ENCODE measurements at regions of chr15 and their contacts with region 1.

Region 1: GRCh38 chr15:55267401-55268175 is 22.0 kb downstream of the RAB27A start:
- DNase-seq: peak; percentile 65 to 90 (median 85)
- H3K4me3 ChIP-seq: peak overlapping the region; percentile 55
- H3K4me3 Mint-ChIP-seq: peak overlapping the region; percentile 44 to 83 (median 68)
- H3K27ac ChIP-seq: peak overlapping the region; percentile 81
- H3K27ac Mint-ChIP-seq: peak overlapping the region; percentile 91 to 98 (median 96)
- H3K4me1 ChIP-seq: peaks cover 74% of the 10 kb centered on the region
- H3K4me1 Mint-ChIP-seq: peaks cover 87 to 99% (median 91%) of the 10 kb centered on the region in 3 donors
- H3K27me3 ChIP-seq: no peaks in the 10 kb centered on the region
- H3K27me3 Mint-ChIP-seq: no peaks in the 10 kb centered on the region

Region 2: GRCh38 chr15:55255714-55256113 is 11.9 kb before region 1 on chr15:
- CTCF ChIA-PET with region 1: interaction called, 14 read pairs
- POLR2A ChIA-PET with region 1: interaction called, 15 read pairs
- DNase-seq: peak in 2 of 5 donors; percentile 38 to 43
- H3K4me3 ChIP-seq: peak overlapping the region; percentile 63
- H3K4me3 Mint-ChIP-seq: peak overlapping the region; percentile 86 to 91 (median 89)
- H3K27ac ChIP-seq: peak overlapping the region; percentile 52
- H3K27ac Mint-ChIP-seq: peak overlapping the region; percentile 91 to 98 (median 96)
- H3K4me1 ChIP-seq: peaks cover 58% of the 10 kb centered on the region
- H3K4me1 Mint-ChIP-seq: peaks cover 78 to 91% (median 82%) of the 10 kb centered on the region in 3 donors
- H3K27me3 ChIP-seq: no peaks in the 10 kb centered on the region
- H3K27me3 Mint-ChIP-seq: no peaks in the 10 kb centered on the region

Region 3: GRCh38 chr15:55279746-55280351 is 12.3 kb after region 1 on chr15:
- CTCF ChIA-PET with region 1: interaction called, 9 read pairs
- POLR2A ChIA-PET with region 1: interaction called, 27 read pairs
- DNase-seq: peak; percentile 32 to 82 (median 49)
- H3K4me3 ChIP-seq: peak overlapping the region; percentile 6
- H3K4me3 Mint-ChIP-seq: peak overlapping the region; percentile 61 to 83 (median 78)
- H3K27ac ChIP-seq: peak overlapping the region; percentile 57
- H3K27ac Mint-ChIP-seq: peak overlapping the region; percentile 94 to 99 (median 97)
- H3K4me1 ChIP-seq: peaks cover 90% of the 10 kb centered on the region
- H3K4me1 Mint-ChIP-seq: peaks cover 94 to 99% (median 99%) of the 10 kb centered on the region in 3 donors
- H3K27me3 ChIP-seq: no peaks in the 10 kb centered on the region
- H3K27me3 Mint-ChIP-seq: no peaks in the 10 kb centered on the region

Region 4: DNA sequence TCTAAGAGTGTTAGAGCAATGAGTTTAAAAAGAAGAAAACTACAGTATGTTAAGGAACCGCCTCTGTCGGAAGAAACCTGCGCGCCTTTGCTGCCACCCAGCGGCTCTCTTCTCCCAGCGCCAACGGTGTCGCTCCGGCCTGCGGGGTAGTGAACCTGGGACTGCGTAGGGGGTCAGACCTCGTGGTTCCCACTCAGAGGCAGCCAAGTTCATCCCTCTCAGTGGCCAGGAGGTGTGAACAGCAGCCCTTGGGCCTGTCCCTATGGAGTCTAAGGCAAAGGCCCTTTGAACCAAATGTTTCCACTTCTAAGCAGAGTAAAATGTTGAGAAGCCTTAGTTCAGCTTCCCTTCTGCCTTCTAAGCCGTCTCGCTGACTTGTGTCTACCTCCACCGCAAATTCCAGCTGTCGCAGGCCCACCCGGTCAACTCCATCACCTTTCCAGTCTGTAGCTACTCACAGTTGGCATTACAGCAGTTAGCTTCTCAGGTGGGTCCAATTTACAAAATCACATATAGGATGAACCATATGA is 23.0 kb after region 1 on chr15:
- CTCF ChIA-PET with region 1: interaction called, 10 read pairs
- POLR2A ChIA-PET with region 1: interaction called, 9 read pairs
- DNase-seq: peak; percentile 75 to 90 (median 80)
- H3K4me3 ChIP-seq: peak overlapping the region; percentile 87
- H3K4me3 Mint-ChIP-seq: peak overlapping the region; percentile 92 to 99 (median 97)
- H3K27ac ChIP-seq: peak overlapping the region; percentile 91
- H3K27ac Mint-ChIP-seq: peak overlapping the region; percentile 94 to 99 (median 96)
- H3K4me1 ChIP-seq: peaks cover 16% of the 10 kb centered on the region
- H3K4me1 Mint-ChIP-seq: peaks cover 29 to 39% (median 39%) of the 10 kb centered on the region in 3 donors
- H3K27me3 ChIP-seq: no peaks in the 10 kb centered on the region
- H3K27me3 Mint-ChIP-seq: no peaks in the 10 kb centered on the region

Region 5: DNA sequence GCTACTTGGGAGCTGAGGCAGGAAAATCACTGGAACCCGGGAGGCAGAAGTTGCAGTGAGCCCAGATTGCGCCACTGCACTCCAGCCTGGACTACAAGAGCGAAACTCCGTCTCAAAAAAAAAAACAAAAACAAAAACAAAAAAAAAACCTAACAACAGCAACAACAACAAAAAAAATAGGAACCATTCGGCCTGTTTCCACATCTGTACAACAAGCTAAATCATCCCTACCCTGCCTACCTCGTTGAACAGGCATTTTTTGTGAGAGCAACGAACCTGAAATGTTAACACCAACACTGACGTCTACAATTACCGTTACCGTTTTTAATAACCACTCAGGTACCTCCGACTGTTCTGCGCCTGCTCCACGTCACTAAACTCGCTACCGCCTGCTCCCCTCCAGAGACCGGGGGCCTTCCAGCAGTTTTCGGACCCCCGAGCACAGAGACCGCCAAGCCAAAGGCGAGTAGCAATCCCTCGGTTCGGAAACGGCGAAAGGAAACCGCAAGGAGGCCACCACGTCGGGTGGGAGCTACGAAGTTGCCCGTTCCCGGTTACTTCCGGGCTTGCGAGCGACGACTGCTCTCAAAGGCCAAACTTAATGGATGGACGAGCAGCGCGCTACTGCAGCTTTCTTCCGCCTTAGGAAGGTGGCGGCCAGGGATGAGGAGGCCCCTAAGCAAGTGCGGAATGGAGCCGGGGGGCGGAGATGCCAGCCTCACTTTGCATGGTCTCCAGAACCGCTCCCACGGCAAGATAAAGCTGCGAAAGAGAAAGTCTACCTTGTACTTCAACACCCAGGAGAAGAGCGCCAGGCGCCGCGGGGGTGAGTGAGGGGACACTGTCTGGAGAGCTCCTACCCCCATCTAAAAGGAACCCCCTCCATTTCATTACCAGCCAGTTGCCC is 51.3 kb after region 1 on chr15 and contains the starts of genes PIGB and PIGBOS1:
- CTCF ChIA-PET with region 1: interaction called, 3 read pairs
- POLR2A ChIA-PET with region 1: interaction called, 12 read pairs
- DNase-seq: peak; percentile 62 to 86 (median 84)
- H3K4me3 ChIP-seq: peak within 1 kb of the TSS; percentile 91
- H3K4me3 Mint-ChIP-seq: peak within 1 kb of the TSS; percentile 98 to 100 (median 98)
- H3K27ac ChIP-seq: peak within 1 kb of the TSS; percentile 99
- H3K27ac Mint-ChIP-seq: peak within 1 kb of the TSS; percentile 99 to 100 (median 100)
- H3K4me1 ChIP-seq: peaks cover 38% of the 10 kb centered on the region
- H3K4me1 Mint-ChIP-seq: peaks cover 70 to 86% (median 81%) of the 10 kb centered on the region in 3 donors
- H3K27me3 ChIP-seq: no peaks in the 10 kb centered on the region
- H3K27me3 Mint-ChIP-seq: peaks cover 0 to 2% of the 10 kb centered on the region in 2 donors
- total RNA-seq, gene PIGB: 17.4 to 17.9 TPM
- total RNA-seq, gene PIGBOS1: 11.5 to 11.9 TPM

Region 6: GRCh38 chr15:55587321-55588069 is 319.9 kb after region 1 on chr15:
- CTCF ChIA-PET with region 1: no interaction called
- POLR2A ChIA-PET with region 1: no interaction called
- DNase-seq: peak in 1 of 5 donors; percentile 3
- H3K4me3 ChIP-seq: no peak overlapping the region
- H3K4me3 Mint-ChIP-seq: peak overlapping the region in 6 of 7 donors; percentile 47 to 64 (median 60)
- H3K27ac ChIP-seq: no peak overlapping the region
- H3K27ac Mint-ChIP-seq: no peak overlapping the region
- H3K4me1 ChIP-seq: no peaks in the 10 kb centered on the region
- H3K4me1 Mint-ChIP-seq: peaks cover 0 to 7% (median 0%) of the 10 kb centered on the region in 3 donors
- H3K27me3 ChIP-seq: peaks cover 29% of the 10 kb centered on the region
- H3K27me3 Mint-ChIP-seq: peaks cover 44 to 46% of the 10 kb centered on the region in 2 donors

Measured in CD8-positive, alpha-beta memory T cell (primary cell).